CD8-positive, alpha-beta T cell (primary cell): ENCODE measurements at regions of chr2 and their contacts with region 1.

Region 1: GRCh38 chr2:106193977-106194778 is at the start of gene UXS1:
- DNase-seq: peak; percentile 97 to 99 (median 98)
- ATAC-seq: peak; percentile 80
- H3K4me3 ChIP-seq: peak within 1 kb of the TSS; percentile 80 to 90
- H3K4me3 Mint-ChIP-seq: peak within 1 kb of the TSS; percentile 97
- H3K27ac ChIP-seq: peak within 1 kb of the TSS; percentile 70 to 77
- H3K27ac Mint-ChIP-seq: peak within 1 kb of the TSS; percentile 97
- H3K4me1 ChIP-seq: peaks cover 39% of the 10 kb centered on the region
- H3K4me1 Mint-ChIP-seq: peaks cover 46% of the 10 kb centered on the region
- H3K27me3 ChIP-seq: no peaks in the 10 kb centered on the region
- H3K27me3 Mint-ChIP-seq: no peaks in the 10 kb centered on the region
- CTCF ChIP-seq: no peak
- total RNA-seq, gene UXS1: 62.1 to 70.8 TPM

Region 2: GRCh38 chr2:105337124-105338019 is 856.8 kb before region 1 on chr2 and contains the start of gene C2orf49:
- CTCF ChIA-PET with region 1: no interaction called
- POLR2A ChIA-PET with region 1: no interaction called
- intact Hi-C with region 1: loop called (anchors 10 kb)
- DNase-seq: peak; percentile 76 to 94 (median 90)
- ATAC-seq: peak; percentile 91
- H3K4me3 ChIP-seq: peak within 1 kb of the TSS; percentile 83 to 92
- H3K4me3 Mint-ChIP-seq: peak within 1 kb of the TSS; percentile 100
- H3K27ac ChIP-seq: peak within 1 kb of the TSS; percentile 96 to 98
- H3K27ac Mint-ChIP-seq: peak within 1 kb of the TSS; percentile 100
- H3K4me1 ChIP-seq: peaks cover 18% of the 10 kb centered on the region
- H3K4me1 Mint-ChIP-seq: peaks cover 32% of the 10 kb centered on the region
- H3K27me3 ChIP-seq: no peaks in the 10 kb centered on the region
- H3K27me3 Mint-ChIP-seq: no peaks in the 10 kb centered on the region
- CTCF ChIP-seq: no peak
- total RNA-seq, gene C2orf49: 27.8 to 28.9 TPM

Region 3: GRCh38 chr2:106147159-106147558 is 47.0 kb before region 1 on chr2:
- CTCF ChIA-PET with region 1: no interaction called
- POLR2A ChIA-PET with region 1: no interaction called
- intact Hi-C with region 1: loop called in 1 of 2 experiments (anchors 5 kb)
- DNase-seq: no peak
- ATAC-seq: no peak
- H3K4me3 ChIP-seq: no peak overlapping the region
- H3K4me3 Mint-ChIP-seq: no peak overlapping the region
- H3K27ac ChIP-seq: peak overlapping the region in 1 of 2 experiments; percentile 7
- H3K27ac Mint-ChIP-seq: peak overlapping the region; percentile 5
- H3K4me1 ChIP-seq: peaks cover 21% of the 10 kb centered on the region
- H3K4me1 Mint-ChIP-seq: peaks cover 76% of the 10 kb centered on the region
- H3K27me3 ChIP-seq: no peaks in the 10 kb centered on the region
- H3K27me3 Mint-ChIP-seq: no peaks in the 10 kb centered on the region
- CTCF ChIP-seq: no peak